BJ (cell line): ENCODE measurements at regions of chr15 and their contacts with region 1.

Region 1: DNA sequence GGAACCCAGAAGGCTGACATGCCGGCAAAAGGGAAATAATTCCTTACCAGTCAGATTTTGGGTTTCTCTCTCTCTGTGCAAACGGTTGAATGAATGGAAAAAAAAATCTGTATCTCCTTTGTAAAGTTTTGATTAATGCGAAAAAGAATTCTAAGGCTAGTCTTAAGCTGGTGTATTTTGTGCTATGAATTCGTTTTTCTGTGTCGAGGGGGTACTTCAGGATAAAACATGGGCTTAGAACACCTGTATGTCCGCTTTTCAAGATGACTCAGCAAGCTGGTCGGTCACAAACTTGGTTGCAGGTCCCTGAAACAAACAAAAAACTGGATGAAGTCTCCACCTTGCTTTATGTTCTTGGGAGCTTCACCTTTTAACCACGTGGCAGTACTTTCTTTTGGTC is 28.5 kb downstream of the IGDCC3 start:
- DNase-seq: no peak
- H3K4me3 ChIP-seq: no peak overlapping the region
- H3K27me3 ChIP-seq: peaks cover 16% of the 10 kb centered on the region
- CTCF ChIP-seq: no peak

Region 2: GRCh38 chr15:65133548-65134200 is 215.7 kb before region 1 on chr15 and contains the start of gene PDCD7:
- CTCF ChIA-PET with region 1: no interaction called
- POLR2A ChIA-PET with region 1: no interaction called
- DNase-seq: peak; percentile 57
- H3K4me3 ChIP-seq: peak within 1 kb of the TSS; percentile 62
- H3K27me3 ChIP-seq: no peaks in the 10 kb centered on the region
- CTCF ChIP-seq: no peak
- polyA plus RNA-seq, gene PDCD7: 11.8 and 12.0 TPM in 2 replicates

Region 3: DNA sequence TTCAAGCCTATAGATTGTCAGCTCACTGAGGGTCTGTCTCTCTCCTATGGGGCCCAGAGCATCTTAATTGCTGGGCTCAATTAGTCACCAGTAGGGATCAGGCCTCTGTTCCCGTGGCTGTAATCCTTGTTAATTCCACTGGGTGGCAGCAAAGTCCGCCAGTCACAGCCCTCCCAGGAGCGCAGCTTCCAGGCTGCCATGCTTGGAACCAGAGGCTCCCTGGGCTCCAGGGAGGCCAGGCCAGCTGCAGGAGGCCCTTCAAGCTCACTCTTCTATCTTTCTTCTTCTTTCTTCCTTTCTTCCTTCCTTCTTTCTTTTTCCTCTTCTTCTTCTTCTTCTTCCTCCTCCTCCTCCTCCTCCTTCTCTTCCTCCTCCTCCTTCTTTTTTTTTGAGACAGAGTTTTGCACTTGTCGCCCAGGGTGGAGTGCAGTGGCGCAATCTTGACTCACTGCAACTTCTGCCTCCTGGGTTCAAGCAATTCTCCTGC is 30.4 kb before region 1 on chr15:
- CTCF ChIA-PET with region 1: interaction called, 10 read pairs
- POLR2A ChIA-PET with region 1: no interaction called
- DNase-seq: peak; percentile 16
- H3K4me3 ChIP-seq: no peak overlapping the region
- H3K27me3 ChIP-seq: peaks cover 9% of the 10 kb centered on the region
- CTCF ChIP-seq: peak; percentile 73

Region 4: GRCh38 chr15:65334586-65335231 is 14.6 kb before region 1 on chr15:
- CTCF ChIA-PET with region 1: no interaction called
- POLR2A ChIA-PET with region 1: no interaction called
- DNase-seq: no peak
- H3K4me3 ChIP-seq: no peak overlapping the region
- H3K27me3 ChIP-seq: peaks cover 18% of the 10 kb centered on the region
- CTCF ChIP-seq: no peak

Region 5: DNA sequence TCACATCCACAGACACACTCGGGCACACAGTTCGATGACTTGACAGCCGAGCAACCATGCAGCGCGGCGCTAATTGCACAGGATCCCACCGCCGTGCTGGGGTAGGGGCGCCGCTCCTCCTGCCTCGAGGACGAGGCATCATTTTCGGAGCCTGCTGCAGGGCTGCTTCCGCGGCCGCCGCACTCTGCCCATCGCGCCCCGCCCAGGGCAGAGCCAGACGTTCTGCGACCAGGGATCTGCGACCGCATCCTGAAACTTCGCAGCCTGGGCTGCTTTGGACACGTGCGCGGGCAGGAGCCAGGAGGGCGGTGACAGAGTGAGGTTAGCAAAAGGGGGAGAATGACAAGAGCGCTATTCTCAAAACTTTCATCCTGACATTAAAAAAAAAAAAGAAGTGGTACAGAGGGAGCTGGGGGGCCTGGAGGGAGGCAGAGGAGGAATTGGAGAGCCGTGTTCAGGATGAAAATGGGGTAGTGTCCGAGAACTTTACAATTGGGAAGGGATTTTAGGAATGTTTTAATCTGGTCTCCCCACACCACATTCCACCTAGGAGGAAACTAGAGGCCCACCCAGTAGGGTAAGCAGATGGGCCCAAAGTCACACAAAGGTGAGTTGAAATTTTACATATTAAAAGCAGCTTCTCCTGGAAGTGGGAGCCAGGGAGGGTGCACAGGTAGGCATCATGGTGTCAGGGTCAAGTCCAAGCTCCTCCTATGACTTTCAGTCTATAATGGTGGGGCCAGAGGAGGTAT is 12.5 kb after region 1 on chr15:
- CTCF ChIA-PET with region 1: no interaction called
- POLR2A ChIA-PET with region 1: no interaction called
- DNase-seq: no peak
- H3K4me3 ChIP-seq: no peak overlapping the region
- H3K27me3 ChIP-seq: peaks cover 14% of the 10 kb centered on the region
- CTCF ChIP-seq: no peak